Calu3 (cell line): ENCODE measurements at regions of chr15 and their contacts with region 1.

Region 1: DNA sequence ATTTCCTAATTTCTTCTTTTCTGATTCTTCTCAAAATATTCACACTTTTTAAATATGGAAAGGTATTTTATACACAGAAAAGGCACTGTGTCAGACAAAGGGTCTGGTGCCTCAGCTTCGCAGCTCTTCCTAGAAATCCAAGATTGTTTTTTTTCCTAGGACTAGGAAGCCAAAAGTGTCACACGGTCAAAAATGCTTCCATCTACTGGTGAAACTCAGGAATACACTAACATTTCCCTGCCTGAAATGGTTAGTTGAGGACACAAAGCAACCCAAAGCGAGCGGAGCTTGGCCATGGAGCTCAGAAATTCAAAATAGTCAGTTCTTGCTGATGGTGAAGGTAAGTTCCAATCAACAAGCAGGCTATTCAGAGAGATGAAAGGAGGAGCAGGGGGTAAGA is 426.5 kb upstream of the RASGRP1 start:
- DNase-seq: no peak
- H3K4me3 Mint-ChIP-seq: no peak overlapping the region
- H3K27ac Mint-ChIP-seq: no peak overlapping the region
- H3K4me1 Mint-ChIP-seq: peaks cover 29% of the 10 kb centered on the region
- H3K27me3 Mint-ChIP-seq: no peaks in the 10 kb centered on the region
- CTCF ChIP-seq: peak; percentile 28

Region 2: GRCh38 chr15:38817427-38818156 is 173.5 kb before region 1 on chr15:
- CTCF ChIA-PET with region 1: no interaction called
- intact Hi-C with region 1: loop called (anchors 2 kb)
- DNase-seq: peak; percentile 89
- H3K4me3 Mint-ChIP-seq: no peak overlapping the region
- H3K27ac Mint-ChIP-seq: no peak overlapping the region
- H3K4me1 Mint-ChIP-seq: no peaks in the 10 kb centered on the region
- H3K27me3 Mint-ChIP-seq: no peaks in the 10 kb centered on the region
- CTCF ChIP-seq: peak; percentile 69

Region 3: DNA sequence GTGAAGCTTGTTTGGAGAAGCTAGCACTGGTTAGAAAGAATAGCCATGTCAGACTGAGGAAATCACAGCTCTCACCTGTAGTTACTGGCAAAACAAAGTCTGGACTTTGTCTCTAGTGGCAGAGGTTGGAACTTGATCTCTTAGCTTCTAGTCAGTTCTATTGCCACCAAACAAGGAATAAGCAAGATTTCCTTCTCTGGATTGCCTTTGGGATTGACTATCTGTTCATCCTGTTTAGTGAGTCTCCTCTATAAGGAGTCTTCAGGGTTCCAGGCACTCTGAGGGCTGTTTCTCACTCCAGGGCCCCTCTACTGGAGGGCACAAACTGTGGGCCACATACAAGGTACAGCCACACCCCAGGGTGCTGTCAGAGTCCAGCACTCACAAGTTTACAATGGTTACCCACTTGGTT is 163.1 kb after region 1 on chr15:
- CTCF ChIA-PET with region 1: no interaction called
- intact Hi-C with region 1: loop called (anchors 10 kb)
- DNase-seq: no peak
- H3K4me3 Mint-ChIP-seq: no peak overlapping the region
- H3K27ac Mint-ChIP-seq: no peak overlapping the region
- H3K4me1 Mint-ChIP-seq: peaks cover 9% of the 10 kb centered on the region
- H3K27me3 Mint-ChIP-seq: no peaks in the 10 kb centered on the region
- CTCF ChIP-seq: no peak

Region 4: GRCh38 chr15:39472621-39473297 is 481.6 kb after region 1 on chr15:
- CTCF ChIA-PET with region 1: no interaction called
- intact Hi-C with region 1: no loop called
- DNase-seq: no peak
- H3K4me3 Mint-ChIP-seq: no peak overlapping the region
- H3K27ac Mint-ChIP-seq: no peak overlapping the region
- H3K4me1 Mint-ChIP-seq: no peaks in the 10 kb centered on the region
- H3K27me3 Mint-ChIP-seq: no peaks in the 10 kb centered on the region
- CTCF ChIP-seq: no peak